Tibial artery (tissue), 4 donors: ENCODE measurements at regions of chr5 and their contacts with region 1.

Region 1: DNA sequence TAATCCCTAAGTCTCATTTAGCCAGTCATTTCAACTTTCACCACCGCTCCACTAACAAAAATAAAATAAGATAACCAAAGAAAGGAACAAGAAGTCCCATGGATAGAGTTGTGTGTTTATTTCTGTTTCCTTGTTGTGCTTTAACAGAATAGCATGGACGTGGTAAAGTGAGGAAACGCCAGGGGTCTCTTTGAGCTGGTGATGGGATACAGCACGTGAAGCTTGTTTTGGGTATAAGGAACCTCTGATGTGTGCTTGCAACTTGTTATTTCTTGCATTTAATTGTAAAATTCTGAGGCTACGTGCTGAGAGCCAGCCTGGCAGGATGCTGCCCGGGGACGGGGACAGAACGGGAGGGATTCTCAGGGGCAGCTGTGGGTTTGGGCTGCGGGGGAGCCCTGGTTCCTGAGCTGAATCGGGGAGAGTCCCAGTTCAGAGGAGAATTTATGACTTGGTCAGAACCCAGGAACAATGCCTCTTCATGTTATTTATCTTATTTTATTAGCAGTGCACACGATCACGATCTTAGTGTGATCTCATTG is 63.4 kb downstream of the ANKRD33B start:
- DNase-seq: no peak
- H3K4me3 ChIP-seq: peak overlapping the region; percentile 32 to 52
- H3K27ac ChIP-seq: peak overlapping the region; percentile 80 to 81
- H3K4me1 ChIP-seq: peaks cover 0 to 15% (median 7%) of the 10 kb centered on the region in 4 donors
- H3K27me3 ChIP-seq: no peaks in the 10 kb centered on the region
- CTCF ChIP-seq: no peak

Region 2: GRCh38 chr5:10283927-10284635 is 343.1 kb before region 1 on chr5:
- intact Hi-C with region 1: loop called (anchors 5 kb)
- DNase-seq: peak; percentile 81 to 89
- H3K4me3 ChIP-seq: no peak overlapping the region
- H3K27ac ChIP-seq: no peak overlapping the region
- H3K4me1 ChIP-seq: peaks cover 0 to 13% (median 0%) of the 10 kb centered on the region in 4 donors
- H3K27me3 ChIP-seq: no peaks in the 10 kb centered on the region
- CTCF ChIP-seq: peak; percentile 87 to 93

Region 3: DNA sequence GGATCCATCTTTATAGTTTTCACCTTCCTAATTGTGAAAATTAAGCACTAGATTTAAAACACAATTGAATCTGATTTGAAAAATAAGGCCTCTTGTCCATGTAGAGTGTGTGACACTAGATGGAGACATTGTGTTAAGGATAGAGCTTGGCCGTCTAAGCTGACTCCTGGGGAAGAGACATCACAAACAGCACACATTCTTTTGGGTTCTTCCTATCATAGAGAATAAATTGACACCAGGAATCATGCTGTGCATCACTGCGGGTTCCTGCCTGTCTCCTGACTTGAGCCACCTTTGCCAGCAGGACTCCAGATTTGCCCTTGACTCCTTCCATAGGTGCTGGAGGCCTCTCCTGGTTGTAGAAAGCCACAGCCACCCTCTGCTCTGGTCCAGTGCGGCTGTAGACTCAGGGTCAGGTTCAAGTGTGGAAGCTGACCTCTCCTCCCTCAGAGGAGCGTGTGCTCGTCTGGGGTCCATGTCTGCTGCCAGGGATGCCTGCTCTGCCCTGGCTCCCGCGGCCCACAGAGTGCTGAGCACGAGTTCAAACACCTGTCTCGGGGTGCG is 174.4 kb before region 1 on chr5:
- intact Hi-C with region 1: loop called (anchors 2 kb)
- DNase-seq: no peak
- H3K4me3 ChIP-seq: no peak overlapping the region
- H3K27ac ChIP-seq: no peak overlapping the region
- H3K4me1 ChIP-seq: peaks cover 0 to 15% (median 11%) of the 10 kb centered on the region in 4 donors
- H3K27me3 ChIP-seq: peaks cover 0 to 6% of the 10 kb centered on the region in 2 donors
- CTCF ChIP-seq: peak; percentile 71 to 80

Region 4: DNA sequence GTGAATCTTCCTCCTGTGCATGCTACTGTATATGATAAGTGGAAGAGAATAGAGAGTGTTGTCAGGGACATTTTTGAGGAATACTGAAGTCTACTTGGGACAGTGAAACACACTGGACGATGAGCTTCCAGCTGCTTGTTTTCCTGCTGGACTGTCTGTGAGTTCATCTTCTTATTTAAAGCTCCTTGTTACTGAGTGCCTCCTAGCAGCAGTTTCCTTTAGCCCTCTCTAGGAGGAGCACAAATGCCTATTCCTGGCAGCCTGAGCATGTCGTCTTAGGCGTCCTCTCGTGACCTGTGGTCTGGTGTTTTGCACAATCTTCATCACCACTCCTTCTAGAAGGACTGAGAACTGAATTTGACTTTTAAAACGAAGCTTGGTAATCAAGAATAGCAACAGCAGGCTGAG is 19.6 kb before region 1 on chr5:
- intact Hi-C with region 1: loop called (anchors 2 kb)
- DNase-seq: peak; percentile 79 to 85
- H3K4me3 ChIP-seq: no peak overlapping the region
- H3K27ac ChIP-seq: no peak overlapping the region
- H3K4me1 ChIP-seq: peaks cover 0 to 14% (median 3%) of the 10 kb centered on the region in 4 donors
- H3K27me3 ChIP-seq: no peaks in the 10 kb centered on the region
- CTCF ChIP-seq: peak in 1 of 2 experiments; percentile 20